Activated CD4-positive, alpha-beta T cell treated with anti-CD3 and anti-CD28 coated beads, Interleukin-2, amount 10 ng/mL, durations not matched to agents 24 days and 14 days (primary cell): ENCODE measurements at regions of chr13 and their contacts with region 1.

Region 1: GRCh38 chr13:40969169-40969901 is 49.8 kb downstream of the ELF1 start:
- DNase-seq: peak; percentile 71
- H3K4me3 Mint-ChIP-seq: peak overlapping the region; percentile 49
- H3K27ac Mint-ChIP-seq: peak overlapping the region; percentile 79
- H3K4me1 Mint-ChIP-seq: peaks cover 58% of the 10 kb centered on the region
- H3K27me3 Mint-ChIP-seq: no peaks in the 10 kb centered on the region

Region 2: DNA sequence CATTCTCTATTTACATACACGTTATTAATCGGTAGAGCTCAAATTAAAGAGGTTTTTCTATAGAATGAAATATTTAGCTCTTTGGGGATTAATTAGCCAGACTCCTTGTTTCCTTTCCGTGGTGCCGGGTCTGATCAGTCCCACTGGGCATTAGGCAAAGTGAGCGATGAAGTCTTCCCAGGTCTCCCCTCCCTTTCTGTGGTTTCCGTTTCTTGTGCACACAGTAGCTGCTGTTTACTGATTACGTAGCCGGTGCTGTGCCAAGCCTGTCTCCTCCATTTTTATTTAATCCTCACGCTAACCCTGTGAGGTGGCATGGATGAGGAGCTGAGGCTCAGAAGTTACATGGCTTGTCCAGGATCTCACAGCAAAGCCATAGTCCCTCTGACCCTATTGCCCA is 171.0 kb before region 1 on chr13:
- intact Hi-C with region 1: no loop called
- DNase-seq: peak; percentile 68
- H3K4me3 Mint-ChIP-seq: peak overlapping the region; percentile 66
- H3K27ac Mint-ChIP-seq: peak overlapping the region; percentile 89
- H3K4me1 Mint-ChIP-seq: peaks cover 10% of the 10 kb centered on the region
- H3K27me3 Mint-ChIP-seq: no peaks in the 10 kb centered on the region

Region 3: GRCh38 chr13:40908546-40908945 is 60.8 kb before region 1 on chr13:
- intact Hi-C with region 1: no loop called
- DNase-seq: no peak
- H3K4me3 Mint-ChIP-seq: no peak overlapping the region
- H3K27ac Mint-ChIP-seq: no peak overlapping the region
- H3K4me1 Mint-ChIP-seq: peaks cover 6% of the 10 kb centered on the region
- H3K27me3 Mint-ChIP-seq: no peaks in the 10 kb centered on the region

Region 4: DNA sequence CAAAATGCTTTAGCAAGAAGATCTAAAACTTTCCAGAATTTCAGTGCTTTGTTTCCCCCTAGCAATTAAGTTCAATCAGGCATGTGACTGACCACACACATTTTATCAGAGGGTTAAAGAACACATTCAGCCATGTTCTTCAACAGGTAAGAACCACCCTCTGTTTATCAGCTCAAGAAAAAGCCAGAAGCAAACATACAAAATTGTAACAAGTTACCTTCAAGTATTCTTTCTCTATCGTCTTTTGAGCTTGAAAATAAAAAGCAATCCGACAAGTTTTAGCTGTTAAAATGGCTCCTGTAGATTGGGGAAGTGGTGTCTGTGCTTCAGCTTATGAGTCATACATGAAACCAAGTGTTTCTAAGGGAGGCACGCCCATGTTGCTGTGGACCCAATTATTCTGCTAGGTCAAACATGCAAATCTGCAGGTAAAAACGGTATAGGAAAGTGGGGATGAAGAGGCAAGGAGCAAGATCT is 49.7 kb after region 1 on chr13 and contains the start of gene ELF1:
- intact Hi-C with region 1: loop called (anchors 10 kb)
- DNase-seq: peak; percentile 89
- H3K4me3 Mint-ChIP-seq: peak within 1 kb of the TSS; percentile 95
- H3K27ac Mint-ChIP-seq: peak within 1 kb of the TSS; percentile 98
- H3K4me1 Mint-ChIP-seq: peaks cover 40% of the 10 kb centered on the region
- H3K27me3 Mint-ChIP-seq: no peaks in the 10 kb centered on the region
- total RNA-seq, gene ELF1: 65.0 and 65.8 TPM in 2 replicates

Region 5: GRCh38 chr13:41034881-41035280 is 65.5 kb after region 1 on chr13:
- intact Hi-C with region 1: no loop called
- DNase-seq: no peak
- H3K4me3 Mint-ChIP-seq: no peak overlapping the region
- H3K27ac Mint-ChIP-seq: no peak overlapping the region
- H3K4me1 Mint-ChIP-seq: peaks cover 23% of the 10 kb centered on the region
- H3K27me3 Mint-ChIP-seq: no peaks in the 10 kb centered on the region